ENCODE measurements at regions of chr1 and their contacts with region 1.

Region 1: GRCh38 chr1:178093205-178093957 is 523 bp upstream of the RASAL2 start:
- DNase-seq: peak; percentile 98
- H3K4me3 Mint-ChIP-seq: peak overlapping the region; percentile 82
- H3K27ac Mint-ChIP-seq: peak overlapping the region; percentile 90
- H3K4me1 Mint-ChIP-seq: peaks cover 38% of the 10 kb centered on the region
- H3K27me3 Mint-ChIP-seq: no peaks in the 10 kb centered on the region
- CTCF ChIP-seq: peak; percentile 7

Region 2: GRCh38 chr1:177959811-177960515 is 133.4 kb before region 1 on chr1:
- CTCF ChIA-PET with region 1: interaction called, 3 read pairs
- POLR2A ChIA-PET with region 1: no interaction called
- intact Hi-C with region 1: loop called (anchors 1 kb)
- DNase-seq: peak; percentile 50
- H3K4me3 Mint-ChIP-seq: no peak overlapping the region
- H3K27ac Mint-ChIP-seq: no peak overlapping the region
- H3K4me1 Mint-ChIP-seq: peaks cover 6% of the 10 kb centered on the region
- H3K27me3 Mint-ChIP-seq: no peaks in the 10 kb centered on the region
- CTCF ChIP-seq: peak; percentile 74

Region 3: DNA sequence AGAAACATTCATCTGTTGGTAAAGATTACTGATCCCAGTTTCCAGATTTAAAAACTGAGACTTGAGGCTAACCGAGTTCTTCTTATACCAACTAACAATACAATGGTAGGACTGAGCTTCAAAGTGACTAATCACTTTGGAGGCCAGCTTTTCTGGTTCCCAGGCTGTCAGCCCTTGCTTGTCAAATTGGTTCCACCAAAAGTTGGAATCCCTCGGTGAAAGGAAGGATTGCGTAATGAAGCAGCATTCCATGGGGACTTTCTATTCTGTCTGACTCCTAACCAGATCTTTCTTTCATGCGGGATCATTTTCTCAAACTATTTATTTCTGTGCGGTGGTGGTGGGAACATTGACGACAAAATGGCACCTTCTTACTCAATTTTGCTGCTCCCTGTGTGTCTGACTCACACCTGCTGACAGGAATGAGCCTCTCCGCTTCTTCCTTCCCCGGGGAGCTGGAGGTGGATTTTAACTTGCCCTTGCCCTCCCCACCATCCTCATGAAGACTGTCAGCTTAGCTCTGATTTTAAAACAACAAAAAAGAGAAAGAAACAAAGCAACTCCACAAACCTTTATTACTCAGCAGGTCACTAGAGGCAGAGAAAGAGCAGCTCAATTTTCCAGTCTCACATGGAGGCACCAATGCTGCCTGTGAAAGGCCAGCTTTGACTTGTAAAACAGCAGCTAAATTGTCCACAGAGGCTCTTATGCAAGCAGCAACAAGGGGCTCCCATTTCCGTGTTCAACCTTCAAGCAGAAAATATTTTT is 32.4 kb before region 1 on chr1:
- CTCF ChIA-PET with region 1: interaction called, 28 read pairs
- POLR2A ChIA-PET with region 1: interaction called, 10 read pairs
- intact Hi-C with region 1: no loop called
- DNase-seq: peak; percentile 90
- H3K4me3 Mint-ChIP-seq: peak overlapping the region; percentile 48
- H3K27ac Mint-ChIP-seq: peak overlapping the region; percentile 77
- H3K4me1 Mint-ChIP-seq: peaks cover 34% of the 10 kb centered on the region
- H3K27me3 Mint-ChIP-seq: no peaks in the 10 kb centered on the region
- CTCF ChIP-seq: peak; percentile 5

Region 4: DNA sequence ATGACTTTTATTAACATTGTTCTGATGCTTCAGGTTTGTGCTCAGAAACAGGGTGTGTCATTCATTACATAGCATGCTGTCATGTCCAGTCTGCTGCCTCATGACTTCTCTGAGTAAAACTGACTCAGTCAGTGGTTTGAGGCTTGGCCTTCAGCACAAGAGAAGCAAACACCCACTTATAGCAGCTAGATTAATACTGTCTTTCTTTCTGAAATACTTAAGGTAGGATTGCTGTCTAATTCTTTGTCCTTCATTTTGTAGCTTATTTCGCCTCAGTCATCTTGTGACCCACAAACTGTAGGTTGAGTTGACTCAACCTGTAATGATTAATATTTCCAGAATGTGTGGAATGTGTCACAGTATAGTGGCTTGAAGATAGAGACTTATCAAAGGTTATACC is 33.4 kb after region 1 on chr1:
- CTCF ChIA-PET with region 1: interaction called, 37 read pairs
- POLR2A ChIA-PET with region 1: interaction called, 93 read pairs
- intact Hi-C with region 1: loop called (anchors 1 kb)
- DNase-seq: peak; percentile 87
- H3K4me3 Mint-ChIP-seq: peak overlapping the region; percentile 60
- H3K27ac Mint-ChIP-seq: peak overlapping the region; percentile 96
- H3K4me1 Mint-ChIP-seq: peaks cover 42% of the 10 kb centered on the region
- H3K27me3 Mint-ChIP-seq: no peaks in the 10 kb centered on the region
- CTCF ChIP-seq: no peak

Region 5: DNA sequence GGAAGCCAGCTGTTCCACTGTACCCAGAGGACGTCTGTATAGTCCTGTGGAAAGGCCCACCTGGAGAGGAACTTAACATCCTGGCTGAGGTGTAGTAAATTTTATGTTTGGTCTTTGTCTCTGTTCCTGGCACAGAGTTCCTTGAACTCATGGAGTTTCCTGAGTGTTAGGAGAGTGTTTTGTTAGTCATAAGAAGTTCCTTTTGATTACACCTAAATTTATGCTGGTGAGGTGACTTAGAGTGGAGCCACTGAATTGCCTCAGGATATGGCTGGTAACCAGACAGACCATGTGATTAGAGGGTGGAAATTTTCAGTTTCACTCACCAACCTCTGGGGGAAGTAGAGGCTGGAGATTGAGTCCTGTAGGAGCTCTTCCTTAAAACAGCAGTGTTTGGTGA is 58.5 kb after region 1 on chr1:
- CTCF ChIA-PET with region 1: interaction called, 6 read pairs
- POLR2A ChIA-PET with region 1: interaction called, 11 read pairs
- intact Hi-C with region 1: no loop called
- DNase-seq: peak; percentile 53
- H3K4me3 Mint-ChIP-seq: no peak overlapping the region
- H3K27ac Mint-ChIP-seq: peak overlapping the region; percentile 92
- H3K4me1 Mint-ChIP-seq: peaks cover 43% of the 10 kb centered on the region
- H3K27me3 Mint-ChIP-seq: no peaks in the 10 kb centered on the region
- CTCF ChIP-seq: no peak

Region 6: GRCh38 chr1:178189814-178190213 is 96.4 kb after region 1 on chr1:
- CTCF ChIA-PET with region 1: interaction called, 5 read pairs
- POLR2A ChIA-PET with region 1: interaction called, 26 read pairs
- intact Hi-C with region 1: loop called (anchors 5 kb)
- DNase-seq: peak; percentile 66
- H3K4me3 Mint-ChIP-seq: no peak overlapping the region
- H3K27ac Mint-ChIP-seq: no peak overlapping the region
- H3K4me1 Mint-ChIP-seq: peaks cover 31% of the 10 kb centered on the region
- H3K27me3 Mint-ChIP-seq: no peaks in the 10 kb centered on the region
- CTCF ChIP-seq: peak; percentile 39

Region 7: DNA sequence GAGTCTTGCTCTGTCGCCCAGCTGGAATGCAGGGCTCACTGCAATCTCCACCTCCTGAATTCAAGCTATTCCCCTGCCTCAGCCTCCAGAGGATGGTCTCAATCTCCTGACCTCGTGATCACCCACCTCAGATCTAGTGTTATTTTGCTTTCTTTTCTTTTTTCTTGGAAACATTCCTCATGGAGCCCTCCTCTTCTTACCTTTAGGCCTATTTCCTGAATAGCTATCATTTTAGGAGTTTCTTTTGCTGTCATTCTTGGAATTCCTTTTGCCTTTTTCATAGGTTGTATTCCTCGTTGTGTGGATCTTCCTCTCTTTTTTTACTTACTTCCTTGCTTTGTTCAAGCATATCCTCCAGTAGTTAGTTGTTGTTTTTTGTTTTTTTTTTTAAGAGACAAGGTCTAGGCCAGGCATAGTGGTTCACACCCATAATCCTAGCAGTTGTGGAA is 174.3 kb after region 1 on chr1:
- CTCF ChIA-PET with region 1: interaction called, 7 read pairs
- POLR2A ChIA-PET with region 1: interaction called, 12 read pairs
- intact Hi-C with region 1: no loop called
- DNase-seq: no peak
- H3K4me3 Mint-ChIP-seq: peak overlapping the region; percentile 26
- H3K27ac Mint-ChIP-seq: peak overlapping the region; percentile 87
- H3K4me1 Mint-ChIP-seq: peaks cover 37% of the 10 kb centered on the region
- H3K27me3 Mint-ChIP-seq: no peaks in the 10 kb centered on the region
- CTCF ChIP-seq: no peak